PC-9 (cell line): ENCODE measurements at regions of chr6 and their contacts with region 1.

Region 1: DNA sequence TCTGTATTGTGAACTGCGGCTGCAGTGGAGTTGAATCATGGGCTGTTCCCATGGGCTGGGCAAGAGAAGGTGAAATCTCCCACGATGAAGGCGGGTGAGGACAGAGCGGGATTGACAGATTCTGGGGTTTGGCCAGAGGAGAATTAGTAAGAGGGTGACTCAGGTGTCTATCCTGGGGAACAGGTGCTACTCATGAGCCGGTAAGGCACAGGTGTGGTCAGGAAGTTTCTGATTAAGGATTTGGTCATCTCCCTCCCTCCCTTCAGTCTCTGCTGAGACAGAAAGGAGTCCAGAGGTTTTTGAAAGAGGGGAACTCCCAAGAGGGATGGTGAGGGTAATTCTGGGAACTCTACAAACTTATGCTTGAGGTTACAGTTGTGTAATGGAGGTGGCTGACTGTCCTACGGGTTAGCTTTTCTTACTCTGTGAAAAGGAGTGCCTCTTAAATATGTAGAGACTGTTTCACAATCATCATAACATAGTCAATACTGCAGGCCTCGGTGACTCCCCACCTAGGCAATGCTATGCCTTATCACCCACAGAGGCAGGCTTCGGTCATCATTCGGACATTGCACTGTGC is 31.5 kb downstream of the SERPINB1 start:
- DNase-seq: peak; percentile 82 to 99
- H3K4me3 ChIP-seq: peak overlapping the region; percentile 19; the same call in 1 of the 2 replicates
- H3K27ac ChIP-seq: peak overlapping the region; percentile 99
- H3K4me1 ChIP-seq: peaks cover 37% of the 10 kb centered on the region
- H3K27me3 ChIP-seq: no peaks in the 10 kb centered on the region
- CTCF ChIP-seq: no peak

Region 2: GRCh38 chr6:2876210-2877056 is 66.3 kb after region 1 on chr6:
- CTCF ChIA-PET with region 1: no interaction called
- POLR2A ChIA-PET with region 1: no interaction called
- intact Hi-C with region 1: loop called (anchors 2 kb)
- DNase-seq: peak; percentile 63 to 92
- H3K4me3 ChIP-seq: peak overlapping the region; percentile 49; the same call in 1 of the 2 replicates
- H3K27ac ChIP-seq: peak overlapping the region; percentile 99
- H3K4me1 ChIP-seq: peaks cover 30% of the 10 kb centered on the region
- H3K27me3 ChIP-seq: no peaks in the 10 kb centered on the region
- CTCF ChIP-seq: no peak